IMR-90 (cell line): ENCODE measurements at regions of chr4 and their contacts with region 1.

Region 1: DNA sequence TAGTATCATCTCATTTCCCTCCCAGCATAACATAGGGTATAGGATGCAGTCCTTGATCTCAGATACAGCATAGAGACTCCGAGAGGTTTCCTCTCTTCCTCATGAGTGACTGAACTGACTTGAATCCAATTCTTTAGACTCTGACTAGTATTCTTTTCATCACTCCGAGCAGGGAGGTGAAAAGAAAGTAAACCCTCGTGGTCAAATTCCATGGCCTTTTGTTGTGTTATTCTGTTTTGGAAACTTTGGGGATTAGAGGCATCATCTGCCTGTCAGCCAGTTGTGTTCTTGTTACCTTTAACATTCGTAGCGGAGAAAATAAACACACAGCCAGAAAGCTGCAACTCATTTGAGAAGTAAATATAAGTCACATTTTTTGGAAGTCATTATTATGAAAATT is 206.6 kb downstream of the ARHGAP10 start:
- DNase-seq: no peak
- ATAC-seq: no peak
- H3K4me3 ChIP-seq: no peak overlapping the region
- H3K27ac ChIP-seq: no peak overlapping the region
- H3K4me1 ChIP-seq: peaks cover 6% of the 10 kb centered on the region
- H3K27me3 ChIP-seq: no peaks in the 10 kb centered on the region
- CTCF ChIP-seq: no peak
- POLR2A ChIP-seq: no peak
- RAD21 ChIP-seq: no peak

Region 2: DNA sequence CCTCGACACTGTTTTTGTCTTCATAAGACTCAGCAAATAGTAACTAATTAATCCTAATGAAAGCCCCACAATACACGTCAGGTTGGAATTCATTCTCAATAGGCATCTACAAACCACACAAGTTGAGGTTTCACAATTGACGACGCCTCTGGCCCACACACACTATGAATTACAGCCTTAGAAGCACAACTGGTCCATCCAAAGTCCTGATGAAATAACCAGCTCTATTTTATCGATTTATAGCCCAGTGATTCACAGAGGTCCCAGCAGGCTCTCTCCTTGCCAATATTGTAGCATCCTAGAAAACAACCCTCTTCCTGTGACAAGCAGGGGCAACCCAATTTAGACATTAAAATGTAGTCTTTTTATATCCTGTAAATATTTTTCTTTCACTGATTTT is 391.7 kb after region 1 on chr4:
- CTCF ChIA-PET with region 1: no interaction called
- POLR2A ChIA-PET with region 1: no interaction called
- dilution Hi-C with region 1: no loop called
- in situ Hi-C with region 1: no loop called
- intact Hi-C with region 1: no loop called
- DNase-seq: no peak
- ATAC-seq: no peak
- H3K4me3 ChIP-seq: no peak overlapping the region
- H3K27ac ChIP-seq: no peak overlapping the region
- H3K4me1 ChIP-seq: no peaks in the 10 kb centered on the region
- H3K27me3 ChIP-seq: no peaks in the 10 kb centered on the region
- CTCF ChIP-seq: no peak
- POLR2A ChIP-seq: no peak
- RAD21 ChIP-seq: no peak

Region 3: DNA sequence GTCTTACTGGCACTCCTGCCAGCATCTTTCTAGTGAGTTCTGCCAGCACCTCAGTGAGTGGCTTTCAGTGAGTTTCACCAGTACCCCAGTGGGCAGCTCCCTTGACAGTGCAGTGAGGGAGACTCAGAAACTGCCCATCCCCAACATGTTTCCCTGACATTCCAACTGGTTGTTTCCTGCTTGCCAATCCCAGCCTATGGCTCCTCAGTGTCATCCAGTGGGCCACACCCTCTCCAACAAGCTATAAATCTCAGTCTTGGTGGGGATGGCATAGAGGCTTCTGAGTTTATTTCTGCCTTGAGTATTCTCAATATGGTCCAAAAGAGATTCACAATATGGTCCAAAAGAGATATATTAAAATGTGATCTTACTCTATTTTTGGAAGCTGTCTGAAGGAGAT is 964.9 kb after region 1 on chr4:
- CTCF ChIA-PET with region 1: interaction called, 12 read pairs
- POLR2A ChIA-PET with region 1: no interaction called
- dilution Hi-C with region 1: no loop called
- in situ Hi-C with region 1: no loop called
- intact Hi-C with region 1: no loop called
- DNase-seq: no peak
- ATAC-seq: no peak
- H3K4me3 ChIP-seq: no peak overlapping the region
- H3K27ac ChIP-seq: no peak overlapping the region
- H3K4me1 ChIP-seq: no peaks in the 10 kb centered on the region
- H3K27me3 ChIP-seq: no peaks in the 10 kb centered on the region
- CTCF ChIP-seq: no peak
- POLR2A ChIP-seq: no peak
- RAD21 ChIP-seq: no peak